ENCODE measurements at regions of chr6 and their contacts with region 1.

Region 1: DNA sequence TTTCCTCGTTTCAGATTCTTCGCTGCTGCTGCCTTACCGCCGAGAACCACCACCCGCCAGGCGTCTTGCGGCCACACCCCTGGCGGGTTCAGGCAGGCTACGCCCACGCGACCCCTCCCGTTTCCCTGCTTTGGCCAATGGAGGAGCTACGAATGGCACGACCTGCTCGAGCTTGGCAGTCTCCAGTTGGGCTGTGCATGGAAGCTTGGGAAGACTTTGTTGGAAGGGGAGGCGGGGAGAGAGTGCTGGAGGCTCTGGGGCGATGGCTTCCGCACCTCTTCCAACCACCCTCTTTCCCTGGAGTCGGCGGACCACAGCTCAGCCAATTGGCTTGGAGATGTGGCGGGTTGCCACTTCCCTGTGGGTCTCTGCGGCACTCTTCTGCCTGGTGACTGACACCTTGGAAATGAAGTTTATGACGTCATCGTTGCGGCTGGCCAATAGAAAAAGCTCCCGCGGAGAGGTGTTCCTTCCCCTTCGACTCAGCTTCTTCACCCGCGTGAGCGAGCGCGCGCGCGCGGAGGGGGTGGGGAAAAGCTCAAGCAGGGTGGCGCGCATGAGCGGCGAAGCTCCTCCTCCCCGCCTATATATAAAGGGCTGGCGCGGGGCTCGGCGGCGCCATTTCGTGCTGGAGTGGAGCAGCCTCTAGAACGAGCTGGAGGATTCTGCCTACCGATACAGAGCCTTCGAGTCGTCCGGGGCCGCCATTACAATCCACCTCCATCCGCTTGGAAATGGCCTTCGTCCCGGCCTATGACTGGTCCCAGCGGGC is 3.4 kb downstream of the BRD2 start:
- DNase-seq: peak; percentile 99
- H3K4me3 ChIP-seq: peak overlapping the region; percentile 94
- H3K27me3 ChIP-seq: no peaks in the 10 kb centered on the region
- CTCF ChIP-seq: no peak

Region 2: GRCh38 chr6:32885698-32886286 is 86.0 kb before region 1 on chr6:
- CTCF ChIA-PET with region 1: interaction called, 10 read pairs
- POLR2A ChIA-PET with region 1: interaction called, 7 read pairs
- DNase-seq: peak; percentile 16
- H3K4me3 ChIP-seq: no peak overlapping the region
- H3K27me3 ChIP-seq: no peaks in the 10 kb centered on the region
- CTCF ChIP-seq: peak; percentile 45

Region 3: DNA sequence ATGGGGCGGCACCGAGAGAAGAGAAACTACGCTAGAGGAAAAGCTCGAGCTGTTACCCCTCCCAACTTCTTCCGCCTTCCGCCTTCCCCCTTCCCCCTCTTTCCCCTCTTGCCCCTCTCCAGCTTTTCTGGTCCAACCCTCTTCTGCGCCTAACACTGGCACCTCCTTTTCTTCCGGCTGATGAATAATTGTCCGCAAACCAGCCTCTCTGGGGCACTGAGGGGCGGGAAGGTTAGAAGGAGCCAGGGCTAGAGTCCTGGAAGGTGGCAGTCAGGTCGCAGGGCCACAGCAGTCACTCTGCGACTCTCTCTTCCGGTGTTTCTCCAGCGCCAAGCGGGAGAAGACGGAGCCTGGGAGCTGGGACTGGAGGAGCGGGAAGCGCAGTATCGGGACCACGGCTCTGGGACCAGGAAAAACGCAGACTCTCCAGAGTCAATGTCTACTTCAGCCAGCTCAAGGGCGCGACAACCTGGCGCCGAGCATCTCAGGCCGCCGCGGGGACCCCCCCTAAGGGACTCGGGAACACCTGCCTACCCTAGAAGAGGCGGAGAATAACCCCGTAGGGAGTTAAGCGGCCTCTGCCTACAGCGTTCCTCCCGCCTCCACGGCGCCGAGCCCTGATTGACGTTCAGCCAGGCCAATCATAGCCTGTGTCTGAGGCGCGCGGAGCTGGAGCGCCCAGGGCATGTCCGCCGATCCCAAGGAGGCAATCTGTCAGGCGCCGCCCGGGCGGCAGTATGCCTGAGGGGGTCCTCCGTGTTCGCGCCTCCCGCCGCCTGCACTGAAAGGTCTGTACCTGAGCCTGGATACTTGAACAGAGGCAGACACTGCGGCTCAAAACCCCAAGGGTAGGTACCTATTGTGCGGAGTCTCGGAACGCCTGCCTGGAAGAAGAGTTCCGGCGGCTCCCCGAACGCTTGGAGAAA is 77.4 kb before region 1 on chr6:
- CTCF ChIA-PET with region 1: no interaction called
- POLR2A ChIA-PET with region 1: interaction called, 21 read pairs
- DNase-seq: peak; percentile 61
- H3K4me3 ChIP-seq: peak overlapping the region; percentile 82
- H3K27me3 ChIP-seq: no peaks in the 10 kb centered on the region
- CTCF ChIP-seq: no peak

Region 4: GRCh38 chr6:33208091-33208967 is 236.6 kb after region 1 on chr6 and contains the start of gene RING1:
- CTCF ChIA-PET with region 1: no interaction called
- POLR2A ChIA-PET with region 1: interaction called, 20 read pairs
- DNase-seq: no peak
- H3K4me3 ChIP-seq: peak within 1 kb of the TSS; percentile 84
- H3K27me3 ChIP-seq: no peaks in the 10 kb centered on the region
- CTCF ChIP-seq: no peak
- polyA plus RNA-seq, gene RING1: 24.4 and 36.6 TPM in 2 replicates

Measured in BJ (cell line).